GM10248 (cell line): ENCODE measurements at regions of chr15 and their contacts with region 1.

Region 1: GRCh38 chr15:68304589-68305337 is 27.2 kb downstream of the FEM1B start:
- DNase-seq: no peak
- CTCF ChIP-seq: no peak

Region 2: GRCh38 chr15:68177742-68178141 is 127.0 kb before region 1 on chr15:
- CTCF ChIA-PET with region 1: no interaction called
- POLR2A ChIA-PET with region 1: no interaction called
- DNase-seq: no peak
- CTCF ChIP-seq: no peak

Region 3: GRCh38 chr15:68252925-68253534 is 51.7 kb before region 1 on chr15:
- CTCF ChIA-PET with region 1: interaction called, 57 read pairs
- POLR2A ChIA-PET with region 1: no interaction called
- DNase-seq: peak; percentile 68
- CTCF ChIP-seq: peak; percentile 80

Region 4: GRCh38 chr15:68277603-68278344 is 27.0 kb before region 1 on chr15 and contains the start of gene FEM1B:
- CTCF ChIA-PET with region 1: interaction called, 20 read pairs
- POLR2A ChIA-PET with region 1: no interaction called
- DNase-seq: peak; percentile 92
- CTCF ChIP-seq: no peak

Region 5: DNA sequence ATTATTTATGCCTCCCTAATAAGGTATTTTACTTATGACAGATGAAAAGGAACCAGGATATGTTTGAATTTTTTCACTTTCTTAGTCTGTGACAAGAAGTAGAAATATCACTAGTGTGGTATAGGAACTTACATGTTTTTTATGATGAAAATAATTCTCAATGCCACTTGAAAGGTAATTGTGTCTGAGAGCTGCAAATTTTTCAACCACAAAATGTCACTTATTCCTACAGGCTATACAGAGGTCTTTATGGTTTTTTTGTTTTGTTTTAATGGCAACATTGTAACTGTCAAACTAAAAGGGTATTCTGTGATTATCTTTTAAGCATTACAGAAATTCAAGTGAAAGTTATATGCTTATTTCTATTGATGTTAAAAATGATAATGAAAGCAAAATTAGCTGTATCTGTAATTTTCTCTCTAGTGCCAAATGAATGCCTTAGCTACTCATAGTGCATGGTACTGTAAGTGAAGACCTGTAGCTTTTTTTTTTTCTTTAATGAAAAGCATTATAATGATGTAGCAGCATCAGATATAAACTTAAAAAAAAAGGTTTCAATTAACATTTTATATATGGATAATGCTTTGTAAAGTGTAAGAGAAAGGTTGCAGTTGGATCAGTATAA is 12.5 kb before region 1 on chr15:
- CTCF ChIA-PET with region 1: interaction called, 24 read pairs
- POLR2A ChIA-PET with region 1: no interaction called
- DNase-seq: no peak
- CTCF ChIP-seq: no peak

Region 6: GRCh38 chr15:68316061-68316804 is 11.5 kb after region 1 on chr15:
- CTCF ChIA-PET with region 1: interaction called, 29 read pairs
- POLR2A ChIA-PET with region 1: no interaction called
- DNase-seq: no peak
- CTCF ChIP-seq: peak; percentile 40

Region 7: DNA sequence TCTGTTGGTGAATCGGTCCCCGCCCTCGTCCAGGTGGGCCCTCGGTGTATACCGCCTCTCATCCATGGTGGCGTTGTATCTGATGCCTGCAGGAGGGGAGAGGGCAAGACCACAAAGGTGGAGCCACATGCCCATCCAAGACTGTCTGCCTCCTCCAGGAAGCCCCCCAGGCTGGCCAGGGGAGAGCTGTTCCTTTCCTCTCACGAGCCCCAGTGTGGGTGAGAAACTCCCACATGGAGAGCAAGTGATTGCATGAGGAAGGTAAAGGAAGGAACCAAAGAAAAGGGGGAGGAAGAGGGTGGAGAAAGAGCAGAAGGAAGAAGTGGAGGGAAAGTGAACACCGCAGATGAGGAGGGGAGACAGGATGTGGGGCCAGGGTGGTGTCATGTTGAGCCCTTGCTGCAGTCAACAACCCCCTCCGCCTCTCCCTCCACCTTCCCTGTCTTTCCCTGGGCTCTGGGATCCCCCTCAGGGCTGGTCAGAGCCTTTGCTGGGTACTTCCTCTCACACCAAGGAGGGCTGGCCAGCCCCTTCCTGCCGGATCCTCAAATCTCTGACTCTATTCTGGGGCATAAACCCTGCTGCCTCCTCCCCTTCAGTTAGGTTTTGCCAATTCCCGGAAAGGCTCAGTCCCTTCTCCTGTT is 22.1 kb after region 1 on chr15:
- CTCF ChIA-PET with region 1: interaction called, 29 read pairs
- POLR2A ChIA-PET with region 1: no interaction called
- DNase-seq: no peak
- CTCF ChIP-seq: no peak

Region 8: GRCh38 chr15:68335251-68335650 is 30.5 kb after region 1 on chr15:
- CTCF ChIA-PET with region 1: interaction called, 12 read pairs
- POLR2A ChIA-PET with region 1: no interaction called
- DNase-seq: no peak
- CTCF ChIP-seq: no peak